ENCODE measurements at regions of chr13 and their contacts with region 1.

Region 1: DNA sequence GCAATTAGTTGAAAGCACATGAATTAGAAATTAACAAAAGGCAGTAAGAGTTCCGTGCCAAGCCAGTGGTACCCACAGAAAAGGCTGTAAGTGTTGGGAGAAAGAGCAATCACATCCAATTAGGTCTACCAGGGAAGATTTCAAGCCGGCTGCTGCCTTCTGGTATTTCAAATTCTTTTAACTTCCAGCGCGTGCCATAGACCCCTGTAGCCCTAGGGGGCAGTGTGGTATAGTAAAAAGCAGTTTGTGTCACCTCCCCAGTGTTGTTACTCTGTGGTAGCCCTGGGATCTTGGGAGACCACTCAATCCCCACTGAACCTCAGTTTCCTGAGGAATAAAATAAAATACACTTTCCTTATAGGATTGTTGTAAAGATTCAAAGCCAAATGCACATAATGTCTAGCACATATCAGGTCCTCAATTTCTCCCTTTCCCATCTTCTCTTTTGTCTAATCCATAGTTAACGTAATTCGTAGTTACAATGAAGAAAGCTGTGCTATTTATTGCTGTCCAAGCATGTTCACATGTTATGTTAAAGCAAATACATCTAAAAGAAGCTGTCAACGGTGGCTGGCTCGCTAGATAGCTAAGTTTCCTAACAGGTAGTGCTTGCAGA is 230.2 kb downstream of the TDRD3 start:
- DNase-seq: peak; percentile 51
- H3K4me3 ChIP-seq: no peak overlapping the region; a peak in 1 of 4 replicates
- H3K27ac ChIP-seq: no peak overlapping the region
- H3K4me1 ChIP-seq: no peaks in the 10 kb centered on the region
- H3K27me3 ChIP-seq: no peaks in the 10 kb centered on the region
- CTCF ChIP-seq: peak; percentile 63
- EP300 ChIP-seq: no peak
- RAD21 ChIP-seq: peak; percentile 85

Region 2: GRCh38 chr13:60612593-60612992 is 14.6 kb before region 1 on chr13:
- CTCF ChIA-PET with region 1: interaction called, 15 read pairs
- POLR2A ChIA-PET with region 1: no interaction called
- DNase-seq: no peak
- H3K4me3 ChIP-seq: no peak overlapping the region
- H3K27ac ChIP-seq: no peak overlapping the region
- H3K4me1 ChIP-seq: no peaks in the 10 kb centered on the region; a peak in 1 of 4 replicates
- H3K27me3 ChIP-seq: no peaks in the 10 kb centered on the region; the same call in 1 of the 2 replicates
- CTCF ChIP-seq: no peak
- EP300 ChIP-seq: no peak
- RAD21 ChIP-seq: no peak

Region 3: DNA sequence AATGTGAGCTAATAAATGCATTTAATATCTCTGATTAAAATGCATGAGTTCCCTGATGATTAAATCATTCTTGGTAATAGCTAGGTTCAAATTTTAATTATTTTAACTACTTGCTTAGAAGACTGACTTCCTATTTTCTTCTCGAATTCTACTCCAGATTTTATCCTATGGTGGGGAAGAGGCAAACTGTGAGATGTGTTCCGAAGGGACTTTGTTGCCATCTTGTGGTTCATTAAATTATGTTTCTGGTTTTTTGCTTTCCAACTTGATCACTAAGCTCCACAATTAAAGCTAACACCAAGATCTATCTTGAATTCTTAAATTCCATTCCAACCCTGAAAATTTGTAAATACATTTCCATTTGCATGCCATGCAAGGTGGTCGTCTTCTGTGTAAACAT is 1326.9 kb after region 1 on chr13:
- CTCF ChIA-PET with region 1: interaction called, 26 read pairs
- POLR2A ChIA-PET with region 1: no interaction called
- DNase-seq: peak; percentile 14
- H3K4me3 ChIP-seq: no peak overlapping the region; a peak in 1 of 4 replicates
- H3K27ac ChIP-seq: no peak overlapping the region
- H3K4me1 ChIP-seq: no peaks in the 10 kb centered on the region
- H3K27me3 ChIP-seq: no peaks in the 10 kb centered on the region
- CTCF ChIP-seq: peak; percentile 51
- EP300 ChIP-seq: no peak
- RAD21 ChIP-seq: peak; percentile 83